ENCODE measurements at regions of chr4 and their contacts with region 1.

Region 1: GRCh38 chr4:6019316-6020263 is 1.4 kb upstream of the C4orf50 start:
- DNase-seq: peak in 2 of 9 donors; percentile 4 to 30
- ATAC-seq: no peak
- H3K4me3 ChIP-seq: no peak overlapping the region
- H3K4me3 Mint-ChIP-seq: no peak overlapping the region
- H3K27ac ChIP-seq: no peak overlapping the region
- H3K27ac Mint-ChIP-seq: peak overlapping the region in 1 of 9 donors; percentile 54
- H3K4me1 ChIP-seq: no peaks in the 10 kb centered on the region
- H3K4me1 Mint-ChIP-seq: peaks cover 0 to 4% (median 0%) of the 10 kb centered on the region in 7 donors
- H3K27me3 ChIP-seq: no peaks in the 10 kb centered on the region
- H3K27me3 Mint-ChIP-seq: peaks cover 0 to 28% (median 5%) of the 10 kb centered on the region in 5 donors

Region 2: DNA sequence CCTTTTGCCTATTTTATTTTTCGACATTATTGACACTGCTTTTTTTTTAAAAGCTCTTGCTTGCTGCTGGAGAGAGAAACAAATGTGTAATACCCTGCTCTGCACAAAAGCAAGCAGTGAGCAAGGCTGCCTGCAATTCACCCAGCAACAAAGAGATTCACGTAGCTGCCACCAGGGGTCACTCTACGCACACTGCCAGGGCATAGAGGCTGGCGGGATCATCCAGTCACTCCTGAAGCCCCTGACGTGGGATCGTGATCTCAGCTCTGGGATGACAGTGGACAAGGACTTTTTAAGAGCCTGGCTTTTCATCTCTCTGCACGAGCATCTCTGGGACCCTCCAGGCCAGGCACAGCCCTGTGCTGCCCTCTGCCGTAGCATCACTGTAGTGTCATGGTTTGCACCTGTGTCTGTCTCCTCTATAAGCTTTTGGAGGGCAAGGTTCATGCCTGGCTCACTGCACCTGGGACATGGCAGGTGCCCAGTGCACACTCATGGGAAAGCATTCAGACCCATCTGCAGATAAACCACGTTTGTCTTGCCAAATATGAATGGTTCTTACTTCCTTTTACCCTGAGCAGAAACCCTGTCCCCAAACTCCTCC is 21.2 kb before region 1 on chr4:
- CTCF ChIA-PET with region 1: interaction called, 3 read pairs
- POLR2A ChIA-PET with region 1: no interaction called
- intact Hi-C with region 1: loop called in 1 of 2 experiments (anchors 1 kb)
- DNase-seq: peak in 6 of 9 donors; percentile 4 to 51 (median 11)
- ATAC-seq: peak; percentile 60
- H3K4me3 ChIP-seq: no peak overlapping the region
- H3K4me3 Mint-ChIP-seq: no peak overlapping the region
- H3K27ac ChIP-seq: no peak overlapping the region
- H3K27ac Mint-ChIP-seq: no peak overlapping the region
- H3K4me1 ChIP-seq: no peaks in the 10 kb centered on the region
- H3K4me1 Mint-ChIP-seq: peaks cover 0 to 3% (median 0%) of the 10 kb centered on the region in 7 donors
- H3K27me3 ChIP-seq: no peaks in the 10 kb centered on the region
- H3K27me3 Mint-ChIP-seq: peaks cover 0 to 35% (median 11%) of the 10 kb centered on the region in 5 donors